ENCODE measurements at regions of chrX and their contacts with region 1.

Region 1: GRCh38 chrX:71118032-71118984 is at the start of gene MED12:
- DNase-seq: peak; percentile 76
- H3K4me3 Mint-ChIP-seq: peak within 1 kb of the TSS; percentile 85
- H3K27ac Mint-ChIP-seq: peak within 1 kb of the TSS; percentile 82
- H3K4me1 Mint-ChIP-seq: peaks cover 20% of the 10 kb centered on the region
- H3K27me3 Mint-ChIP-seq: no peaks in the 10 kb centered on the region
- total RNA-seq, gene MED12: 59.9 and 65.4 TPM in 2 replicates

Region 2: DNA sequence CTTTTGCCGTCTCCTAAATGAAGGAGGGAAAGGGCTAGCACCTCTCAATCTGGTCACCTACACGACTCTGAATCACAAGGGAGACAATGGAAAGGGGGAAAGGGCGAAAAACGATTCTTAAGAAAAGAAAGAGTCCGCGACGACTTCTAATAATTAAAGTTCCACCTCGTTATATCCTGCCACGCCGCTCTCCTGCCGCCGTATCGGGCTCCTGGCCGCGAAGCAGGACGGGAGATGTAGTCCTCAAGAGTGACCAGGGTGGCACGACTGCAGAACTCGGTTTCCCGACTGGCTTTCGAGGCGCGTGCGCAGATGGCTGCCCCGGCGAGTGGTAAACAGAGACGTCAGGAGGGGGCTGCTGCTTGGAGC is 22.8 kb before region 1 on chrX and contains the start of gene FOXO4:
- intact Hi-C with region 1: loop called (anchors 1 kb)
- DNase-seq: peak; percentile 81
- H3K4me3 Mint-ChIP-seq: peak within 1 kb of the TSS; percentile 93
- H3K27ac Mint-ChIP-seq: peak within 1 kb of the TSS; percentile 91
- H3K4me1 Mint-ChIP-seq: peaks cover 33% of the 10 kb centered on the region
- H3K27me3 Mint-ChIP-seq: peaks cover 8% of the 10 kb centered on the region
- total RNA-seq, gene FOXO4: 10.7 and 11.9 TPM in 2 replicates

Region 3: DNA sequence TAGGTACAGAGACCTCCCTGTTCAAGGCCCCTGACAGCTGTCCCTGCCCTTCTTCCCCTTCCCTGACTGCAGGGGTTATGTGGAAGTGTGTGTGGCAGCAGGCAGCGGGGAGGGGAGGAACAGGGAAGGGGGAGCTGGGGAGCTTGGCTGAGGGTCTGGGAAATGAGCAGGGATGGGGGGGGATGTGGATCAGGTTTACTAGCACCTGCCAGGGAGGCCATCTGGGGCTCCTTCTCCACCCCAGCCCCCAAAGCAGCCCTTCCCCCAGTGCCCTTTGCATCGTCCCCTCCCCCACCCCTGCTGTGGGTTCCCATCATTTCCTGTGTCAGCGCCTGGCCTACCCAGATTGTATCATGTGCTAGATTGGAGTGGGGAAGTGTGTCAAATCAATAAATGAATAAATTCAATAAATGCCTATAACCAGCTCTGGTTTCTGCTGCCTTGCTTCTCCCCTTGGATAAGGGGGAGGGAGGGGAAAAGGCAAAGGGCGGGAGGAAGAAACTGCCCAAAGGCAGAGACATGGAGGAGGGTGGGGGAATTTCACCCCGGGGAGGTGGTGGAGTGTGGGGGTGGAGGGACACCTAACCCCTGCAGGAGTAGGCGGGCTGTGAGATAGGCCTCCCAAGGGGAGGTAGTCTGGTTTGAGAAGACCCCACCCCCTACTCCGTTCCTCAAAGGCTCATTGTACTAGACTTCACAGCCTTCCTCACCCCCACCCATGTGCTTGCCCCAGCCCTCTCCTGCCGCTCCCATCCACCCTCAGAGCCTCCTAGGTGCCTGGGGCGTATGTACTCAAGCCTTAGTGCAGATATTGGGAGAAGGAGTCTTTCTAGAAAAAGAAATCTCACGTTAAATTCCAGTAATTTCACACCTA is 15.0 kb before region 1 on chrX:
- intact Hi-C with region 1: loop called (anchors 2 kb)
- DNase-seq: peak; percentile 29
- H3K4me3 Mint-ChIP-seq: peak overlapping the region; percentile 86
- H3K27ac Mint-ChIP-seq: peak overlapping the region; percentile 92
- H3K4me1 Mint-ChIP-seq: peaks cover 74% of the 10 kb centered on the region
- H3K27me3 Mint-ChIP-seq: no peaks in the 10 kb centered on the region

Region 4: DNA sequence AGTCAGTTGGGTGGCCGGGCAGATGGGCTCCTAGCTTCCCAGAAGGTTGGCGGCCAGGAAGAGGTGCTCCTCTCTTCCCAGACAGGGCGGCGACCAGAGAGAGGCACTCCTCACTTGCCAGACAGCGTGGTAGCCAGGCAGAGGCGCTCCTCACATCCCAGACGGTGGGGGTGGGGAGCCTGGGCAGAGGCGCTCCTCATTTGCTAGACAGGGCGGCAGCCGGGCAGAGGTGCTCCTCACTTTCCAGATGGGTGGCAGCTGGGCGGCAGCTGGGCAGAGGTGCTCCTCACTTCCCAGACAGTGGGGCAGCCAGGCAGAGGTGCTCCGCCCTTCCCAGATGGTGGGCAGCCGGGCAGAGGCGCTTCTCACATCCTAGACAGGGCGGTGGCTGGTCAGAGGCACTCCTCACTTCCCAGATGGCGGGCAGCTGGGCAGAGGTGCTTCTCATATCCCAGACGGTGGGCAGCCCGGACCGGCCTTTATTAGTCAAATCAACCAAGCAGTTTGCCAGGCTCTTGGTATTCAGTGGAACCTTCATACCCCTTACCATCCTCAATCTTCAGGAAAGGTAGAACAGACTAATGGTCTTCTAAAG is 151.6 kb after region 1 on chrX:
- intact Hi-C with region 1: no loop called
- DNase-seq: no peak
- H3K4me3 Mint-ChIP-seq: no peak overlapping the region
- H3K27ac Mint-ChIP-seq: no peak overlapping the region
- H3K4me1 Mint-ChIP-seq: no peaks in the 10 kb centered on the region
- H3K27me3 Mint-ChIP-seq: peaks cover 7% of the 10 kb centered on the region

Measured in activated T-helper 1 cell treated with anti-CD3 and anti-CD28 coated beads, Interleukin-12 subunit alpha, Interleukin-12 subunit beta, Interleukin-2, Interleukin-4 antibody, amounts not matched to agents 30 ng/mL and 10 ng/mL and 1 ng/mL, durations not matched to agents 14 hours and 24 hours and 36 hours (primary cell).